SK-N-SH (cell line): ENCODE measurements at regions of chr16 and their contacts with region 1.

Region 1: DNA sequence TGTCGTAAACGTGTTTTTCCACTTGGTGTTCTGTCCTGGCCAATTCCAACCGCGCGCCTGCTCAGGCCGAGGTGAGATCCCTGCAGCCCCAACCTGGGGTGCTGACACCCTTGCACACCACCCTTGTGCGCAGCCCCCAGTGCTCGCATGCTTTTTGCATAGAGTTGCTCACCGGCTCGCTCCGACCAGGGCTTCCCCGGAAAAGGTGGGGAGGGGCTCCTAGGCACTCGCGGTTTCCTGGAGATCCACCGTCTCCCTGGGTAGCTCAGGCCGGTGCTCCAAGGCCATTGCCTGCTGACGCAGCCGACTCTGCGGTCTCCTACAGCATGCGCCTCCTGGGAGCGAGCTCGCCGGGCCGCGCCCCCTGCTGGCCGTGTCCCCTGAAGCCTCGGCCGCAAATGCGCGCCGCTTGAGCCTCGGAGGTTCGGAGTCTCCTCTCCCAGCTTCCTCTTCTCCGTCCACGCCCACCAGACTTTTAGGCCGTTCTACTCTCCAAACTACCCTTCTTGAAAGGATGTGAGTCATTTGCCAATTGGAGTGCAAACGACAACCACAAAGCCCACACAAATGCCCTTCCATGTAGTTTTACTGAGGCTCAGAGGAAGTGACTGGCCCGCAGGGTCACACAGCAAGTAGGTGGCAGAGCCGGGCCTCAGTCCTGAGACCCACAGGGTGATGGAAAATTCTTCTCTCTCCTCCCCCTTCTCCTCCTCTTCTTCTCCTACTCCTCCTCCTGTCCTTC is 7.2 kb upstream of the PDP2 start:
- DNase-seq: peak; percentile 89
- H3K4me3 ChIP-seq: peak overlapping the region; percentile 12 to 59
- H3K27ac ChIP-seq: peak overlapping the region in 1 of 2 experiments; percentile 55; a peak in 1 of 4 replicates
- H3K4me1 ChIP-seq: peaks cover 3 to 5% of the 10 kb centered on the region in 2 experiments; a peak in 3 of 4 replicates
- H3K27me3 ChIP-seq: no peaks in the 10 kb centered on the region
- CTCF ChIP-seq: peak; percentile 97
- EP300 ChIP-seq: peak in 1 of 2 experiments; percentile 45; a peak in 1 of 4 replicates
- RAD21 ChIP-seq: peak; percentile 54

Region 2: DNA sequence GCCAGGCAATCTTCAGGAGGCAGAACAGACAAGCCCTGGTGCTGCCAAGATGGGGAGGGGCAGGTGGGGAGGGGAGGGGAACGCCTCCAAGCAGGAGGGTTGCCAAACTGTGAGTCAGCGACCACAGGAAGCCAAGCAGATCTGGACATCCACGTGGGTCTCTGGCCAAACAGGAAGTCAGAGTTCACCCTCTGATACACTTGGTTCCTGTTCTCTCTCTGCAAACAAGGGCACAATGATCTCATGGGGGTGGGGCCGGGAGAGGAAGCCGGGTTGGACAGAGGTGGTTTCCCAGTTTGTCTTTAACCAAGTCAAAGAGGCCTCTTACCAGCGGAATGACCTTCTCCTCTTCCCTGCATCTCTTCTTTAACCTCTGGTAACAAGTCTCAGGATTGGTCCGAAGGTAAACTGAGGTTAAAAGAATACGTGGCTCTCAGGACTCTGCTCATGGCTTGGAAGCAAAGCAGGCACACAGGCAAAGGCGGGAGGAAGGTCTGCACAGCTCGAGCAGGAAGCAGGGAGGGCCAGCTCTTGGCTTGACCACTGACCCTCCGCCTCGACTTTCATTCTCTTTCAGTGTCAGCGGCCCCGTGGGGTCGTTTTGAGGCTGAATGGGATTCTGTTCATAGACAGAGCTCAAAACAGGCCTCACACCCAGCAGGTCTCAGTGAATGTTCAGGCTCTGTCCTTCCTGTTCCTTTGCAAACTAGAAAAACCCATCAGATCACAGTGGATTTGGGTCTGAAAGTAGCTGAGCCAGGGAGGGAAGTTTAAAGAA is 356.1 kb before region 1 on chr16:
- CTCF ChIA-PET with region 1: no interaction called
- POLR2A ChIA-PET with region 1: no interaction called
- DNase-seq: peak; percentile 66
- H3K4me3 ChIP-seq: no peak overlapping the region
- H3K27ac ChIP-seq: peak overlapping the region; percentile 89 to 94
- H3K4me1 ChIP-seq: peaks cover 15 to 29% of the 10 kb centered on the region in 2 experiments; a peak in 3 of 4 replicates
- H3K27me3 ChIP-seq: no peaks in the 10 kb centered on the region
- CTCF ChIP-seq: no peak
- EP300 ChIP-seq: peak in 1 of 2 experiments; percentile 78; a peak in 1 of 4 replicates
- RAD21 ChIP-seq: no peak

Region 3: GRCh38 chr16:66618588-66619375 is 254.3 kb before region 1 on chr16:
- CTCF ChIA-PET with region 1: interaction called, 15 read pairs
- POLR2A ChIA-PET with region 1: no interaction called
- DNase-seq: no peak
- H3K4me3 ChIP-seq: no peak overlapping the region
- H3K27ac ChIP-seq: peak overlapping the region; percentile 60 to 84
- H3K4me1 ChIP-seq: peaks cover 18 to 41% of the 10 kb centered on the region in 2 experiments
- H3K27me3 ChIP-seq: no peaks in the 10 kb centered on the region
- CTCF ChIP-seq: no peak
- EP300 ChIP-seq: peak in 1 of 2 experiments; percentile 65; a peak in 1 of 4 replicates
- RAD21 ChIP-seq: no peak

Region 4: DNA sequence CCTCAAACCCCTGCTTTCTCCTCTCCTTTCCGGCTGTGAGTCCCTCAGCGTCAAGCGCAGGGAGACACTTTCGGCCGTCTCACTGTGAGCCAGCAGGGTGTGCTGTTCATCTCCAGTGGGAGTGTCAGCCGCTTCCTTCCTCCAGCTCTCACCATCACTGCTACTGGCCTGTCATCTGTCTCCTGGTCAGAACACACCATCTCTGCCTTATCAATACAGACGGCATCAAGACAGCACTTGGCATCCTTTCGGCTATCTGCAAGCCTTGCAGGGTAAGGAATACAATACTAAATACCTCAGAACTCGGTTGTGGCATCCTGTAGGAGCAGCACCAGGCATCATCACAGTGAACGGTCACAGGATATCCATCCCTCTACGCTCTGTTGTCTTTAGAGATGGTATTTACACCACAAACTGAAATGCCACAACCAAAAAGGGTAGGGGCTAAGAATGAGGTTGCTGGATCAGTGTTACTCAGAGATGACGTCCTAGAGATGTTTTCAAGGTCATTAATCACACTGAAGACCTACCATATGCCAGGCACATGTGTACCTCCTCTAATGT is 155.9 kb before region 1 on chr16:
- CTCF ChIA-PET with region 1: interaction called, 11 read pairs
- POLR2A ChIA-PET with region 1: no interaction called
- DNase-seq: peak; percentile 69
- H3K4me3 ChIP-seq: no peak overlapping the region
- H3K27ac ChIP-seq: peak overlapping the region; percentile 5 to 8; a peak in 2 of 4 replicates
- H3K4me1 ChIP-seq: peaks cover 0 to 12% of the 10 kb centered on the region in 2 experiments; a peak in 1 of 4 replicates
- H3K27me3 ChIP-seq: no peaks in the 10 kb centered on the region
- CTCF ChIP-seq: peak; percentile 55
- EP300 ChIP-seq: no peak
- RAD21 ChIP-seq: peak; percentile 58

Region 5: GRCh38 chr16:66824006-66824405 is 49.1 kb before region 1 on chr16:
- CTCF ChIA-PET with region 1: interaction called, 83 read pairs
- POLR2A ChIA-PET with region 1: no interaction called
- DNase-seq: no peak
- H3K4me3 ChIP-seq: no peak overlapping the region
- H3K27ac ChIP-seq: no peak overlapping the region
- H3K4me1 ChIP-seq: no peaks in the 10 kb centered on the region
- H3K27me3 ChIP-seq: no peaks in the 10 kb centered on the region
- CTCF ChIP-seq: no peak
- EP300 ChIP-seq: no peak
- RAD21 ChIP-seq: no peak

Region 6: GRCh38 chr16:66850115-66850815 is 22.8 kb before region 1 on chr16:
- CTCF ChIA-PET with region 1: interaction called, 68 read pairs
- POLR2A ChIA-PET with region 1: no interaction called
- DNase-seq: no peak
- H3K4me3 ChIP-seq: no peak overlapping the region
- H3K27ac ChIP-seq: no peak overlapping the region
- H3K4me1 ChIP-seq: no peaks in the 10 kb centered on the region
- H3K27me3 ChIP-seq: peaks cover 4% of the 10 kb centered on the region; the same call in 1 of the 2 replicates
- CTCF ChIP-seq: no peak
- EP300 ChIP-seq: no peak
- RAD21 ChIP-seq: no peak

Region 7: DNA sequence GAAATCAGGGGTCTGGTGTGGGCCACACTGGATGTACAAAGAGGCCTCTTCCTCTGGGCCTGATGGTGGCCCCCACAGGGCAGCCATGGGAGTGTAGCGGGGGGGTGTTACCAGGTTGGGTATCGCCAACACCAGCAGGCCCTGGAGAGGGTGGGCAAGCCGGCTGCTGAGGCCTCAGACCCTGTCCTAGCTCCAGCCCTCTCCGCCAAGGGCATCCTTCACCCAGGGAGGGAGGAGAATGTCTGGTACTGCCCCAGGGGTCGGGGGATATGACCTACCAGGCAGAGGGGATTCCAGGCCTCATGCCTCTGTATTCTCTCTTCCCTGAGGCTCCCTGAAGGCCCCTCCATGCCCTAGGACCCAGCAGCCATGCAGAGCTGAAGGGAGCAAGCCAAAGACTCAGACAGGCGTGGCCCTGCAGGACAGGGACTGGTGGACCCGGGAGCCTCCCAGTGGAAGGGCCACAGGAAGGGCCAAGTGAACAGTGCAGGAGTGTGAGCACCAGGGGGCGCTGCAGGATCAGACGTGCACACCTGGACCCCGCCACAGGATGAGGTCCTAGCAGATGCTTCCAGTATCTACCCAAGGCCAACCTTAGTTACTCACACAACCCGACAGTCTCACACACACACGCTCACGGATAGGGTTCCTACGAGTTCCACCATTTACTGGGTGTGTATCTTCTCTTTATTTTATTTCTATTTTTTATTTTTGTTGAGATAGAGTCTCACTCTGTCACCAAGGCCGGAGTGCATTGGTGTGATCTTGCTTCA is 104.4 kb after region 1 on chr16:
- CTCF ChIA-PET with region 1: no interaction called
- POLR2A ChIA-PET with region 1: no interaction called
- DNase-seq: peak; percentile 94
- H3K4me3 ChIP-seq: peak overlapping the region in 1 of 2 experiments; percentile 46; a peak in 1 of 4 replicates
- H3K27ac ChIP-seq: no peak overlapping the region
- H3K4me1 ChIP-seq: no peaks in the 10 kb centered on the region; a peak in 1 of 4 replicates
- H3K27me3 ChIP-seq: no peaks in the 10 kb centered on the region
- CTCF ChIP-seq: peak; percentile 93
- EP300 ChIP-seq: no peak
- RAD21 ChIP-seq: peak; percentile 99